Activated naive CD4-positive, alpha-beta T cell treated with anti-CD3 and anti-CD28 coated beads for 36 hours (primary cell): ENCODE measurements at regions of chr18 and their contacts with region 1.

Region 1: DNA sequence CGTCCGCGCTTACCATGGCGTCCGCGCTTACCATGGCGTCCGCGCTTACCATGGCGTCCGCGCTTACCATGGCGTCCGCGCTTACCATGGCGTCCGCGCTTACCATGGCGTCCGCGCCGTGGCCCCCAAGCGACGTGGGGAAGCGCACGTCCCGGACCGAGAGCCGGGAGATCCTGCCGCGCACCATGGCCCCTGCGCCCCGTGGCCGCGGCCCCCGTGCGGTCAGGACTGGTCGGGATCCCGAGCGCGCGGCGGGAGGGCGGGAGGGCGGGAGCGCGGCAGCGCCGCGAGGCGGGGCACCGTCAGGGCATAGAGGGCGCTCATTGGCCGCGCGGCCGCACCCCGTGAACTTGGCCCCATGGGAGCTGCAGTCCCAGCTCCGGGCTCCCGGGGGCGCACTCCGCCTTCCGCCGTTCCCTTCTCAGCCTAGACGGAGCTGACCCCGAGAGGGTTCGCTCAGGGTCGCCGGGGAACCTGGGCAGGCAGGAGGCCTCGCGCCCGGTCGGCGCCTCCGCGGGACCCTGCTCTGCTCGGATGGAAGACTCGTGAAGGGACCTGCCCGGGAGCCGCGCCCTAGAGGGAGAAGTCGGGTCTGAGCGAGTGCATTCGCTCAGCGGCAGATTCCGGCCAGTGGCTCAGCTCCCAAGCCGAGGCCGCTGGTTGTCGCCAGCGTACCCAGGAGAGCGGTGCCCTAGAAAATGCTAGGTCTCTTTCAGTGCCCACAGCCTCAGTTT is at the start of gene ENOSF1:
- DNase-seq: peak; percentile 92
- H3K4me3 Mint-ChIP-seq: peak within 1 kb of the TSS; percentile 78
- H3K27ac Mint-ChIP-seq: peak within 1 kb of the TSS; percentile 75
- H3K4me1 Mint-ChIP-seq: peaks cover 45% of the 10 kb centered on the region
- H3K27me3 Mint-ChIP-seq: no peaks in the 10 kb centered on the region
- total RNA-seq, gene ENOSF1: 61.3 to 66.1 TPM

Region 2: DNA sequence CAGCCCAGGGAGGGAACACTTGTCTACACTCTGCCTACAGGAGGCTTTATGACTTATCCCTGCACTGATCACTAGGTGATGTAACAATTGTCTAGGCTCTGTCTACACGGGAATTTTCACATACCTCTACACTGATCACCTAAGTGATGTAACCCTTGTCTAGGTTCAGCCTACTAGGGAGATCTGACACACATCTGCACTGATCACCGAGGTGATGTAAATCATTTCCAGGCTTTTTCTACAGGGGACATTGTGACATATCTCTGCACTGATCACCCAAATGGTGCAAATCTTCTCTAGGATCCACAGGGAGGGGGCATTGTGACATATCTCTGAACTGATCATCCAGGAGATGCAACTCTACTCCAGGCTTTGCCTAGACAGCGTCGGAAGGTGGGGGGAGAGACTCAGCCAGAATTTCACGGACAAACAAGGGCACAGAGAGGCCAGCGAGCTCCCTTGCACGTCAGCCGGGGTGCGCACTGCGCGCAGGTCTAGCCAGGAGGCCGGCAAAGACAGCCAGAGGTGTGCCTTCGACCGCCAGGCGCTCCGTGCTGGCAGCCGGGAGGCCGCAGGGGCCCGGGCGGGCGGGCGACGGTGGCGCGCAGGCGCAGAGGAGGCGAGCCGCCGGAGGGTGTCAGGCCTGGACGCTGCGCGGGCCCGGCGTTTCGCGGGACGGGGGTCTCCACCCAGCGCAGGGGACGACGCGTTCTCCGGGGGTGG is 601.1 kb before region 1 on chr18:
- CTCF ChIA-PET with region 1: no interaction called
- intact Hi-C with region 1: loop called (anchors 2 kb)
- DNase-seq: peak; percentile 69
- H3K4me3 Mint-ChIP-seq: peak overlapping the region; percentile 84
- H3K27ac Mint-ChIP-seq: peak overlapping the region; percentile 96
- H3K4me1 Mint-ChIP-seq: peaks cover 16% of the 10 kb centered on the region
- H3K27me3 Mint-ChIP-seq: no peaks in the 10 kb centered on the region

Region 3: GRCh38 chr18:596288-596881 is 116.2 kb before region 1 on chr18:
- CTCF ChIA-PET with region 1: no interaction called
- intact Hi-C with region 1: loop called (anchors 1 kb)
- DNase-seq: no peak
- H3K4me3 Mint-ChIP-seq: no peak overlapping the region
- H3K27ac Mint-ChIP-seq: no peak overlapping the region
- H3K4me1 Mint-ChIP-seq: peaks cover 4% of the 10 kb centered on the region
- H3K27me3 Mint-ChIP-seq: peaks cover 17% of the 10 kb centered on the region

Region 4: DNA sequence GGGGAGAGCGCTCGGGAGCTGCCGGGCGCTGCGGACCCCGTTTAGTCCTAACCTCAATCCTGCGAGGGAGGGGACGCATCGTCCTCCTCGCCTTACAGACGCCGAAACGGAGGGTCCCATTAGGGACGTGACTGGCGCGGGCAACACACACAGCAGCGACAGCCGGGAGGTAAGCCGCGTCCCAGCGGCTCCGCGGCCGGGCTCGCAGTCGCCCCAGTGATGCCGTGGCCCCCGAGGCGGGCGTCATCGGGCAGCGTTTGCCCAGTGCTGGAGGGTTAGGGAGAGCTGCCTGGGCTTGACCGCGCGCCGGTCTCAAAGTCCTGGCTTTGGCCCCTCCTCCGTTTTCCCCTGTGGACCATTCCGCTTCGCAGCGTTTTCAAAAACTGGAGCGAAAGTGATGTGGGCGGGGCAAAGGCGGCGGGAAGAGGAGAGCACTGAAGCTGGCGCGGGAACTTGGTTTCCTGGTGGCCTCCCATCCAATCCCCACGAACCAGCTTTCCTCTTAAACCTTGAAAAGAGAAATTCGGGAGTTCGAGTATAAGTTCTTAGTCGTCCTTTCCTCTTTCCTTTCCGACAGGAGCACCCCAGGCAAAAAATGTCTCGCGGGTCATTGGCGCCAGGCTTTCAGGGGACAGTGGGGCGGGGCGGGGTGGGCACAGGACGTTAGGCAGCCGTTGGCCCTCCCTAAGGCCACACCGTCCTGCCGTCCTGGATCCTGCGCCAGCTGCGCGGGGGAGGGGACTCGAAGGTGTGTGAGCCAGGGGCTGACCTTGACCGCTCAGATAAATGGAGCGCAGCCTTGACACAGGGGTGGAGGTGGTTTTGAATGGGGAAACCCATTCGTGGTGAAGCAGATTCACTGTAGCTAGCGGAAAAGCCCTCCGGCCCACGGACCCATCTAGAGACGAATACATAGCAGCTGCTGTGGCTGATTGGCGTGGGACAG is 54.3 kb before region 1 on chr18:
- CTCF ChIA-PET with region 1: interaction called, 3 read pairs
- intact Hi-C with region 1: loop called (anchors 1 kb)
- DNase-seq: peak; percentile 88
- H3K4me3 Mint-ChIP-seq: peak overlapping the region; percentile 93
- H3K27ac Mint-ChIP-seq: peak overlapping the region; percentile 87
- H3K4me1 Mint-ChIP-seq: peaks cover 14% of the 10 kb centered on the region
- H3K27me3 Mint-ChIP-seq: peaks cover 29% of the 10 kb centered on the region

Region 5: GRCh38 chr18:693466-694187 is 18.9 kb before region 1 on chr18:
- CTCF ChIA-PET with region 1: interaction called, 4 read pairs
- intact Hi-C with region 1: loop called (anchors 2 kb)
- DNase-seq: no peak
- H3K4me3 Mint-ChIP-seq: no peak overlapping the region
- H3K27ac Mint-ChIP-seq: peak overlapping the region; percentile 24
- H3K4me1 Mint-ChIP-seq: peaks cover 3% of the 10 kb centered on the region
- H3K27me3 Mint-ChIP-seq: no peaks in the 10 kb centered on the region

Region 6: DNA sequence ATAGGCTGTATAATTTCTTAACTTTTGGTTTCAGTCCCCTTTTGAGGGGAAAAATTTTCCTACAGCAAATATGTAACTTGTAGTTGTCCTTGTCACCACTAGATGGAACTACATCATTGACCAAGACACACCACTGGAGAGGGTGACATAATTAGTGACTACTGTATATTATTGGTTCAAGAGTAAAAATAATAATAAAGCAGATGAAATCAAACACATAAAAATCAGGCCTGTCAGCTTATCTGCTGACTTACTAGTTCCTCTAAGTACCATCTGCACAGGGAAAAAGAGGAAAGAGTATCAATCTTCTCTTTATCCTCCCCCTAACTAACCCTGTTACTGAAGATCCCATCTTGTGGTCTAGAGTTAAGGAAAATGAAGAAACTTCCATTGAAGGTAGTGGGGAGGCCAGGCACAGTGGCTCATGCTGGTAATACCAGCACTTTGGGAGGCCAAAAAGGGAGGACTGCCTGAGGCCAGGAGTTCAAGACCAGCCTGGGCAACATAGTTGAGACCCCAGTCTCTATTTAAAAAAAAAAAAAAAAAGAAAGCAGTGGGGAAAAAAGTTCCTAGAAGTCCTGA is 29.5 kb after region 1 on chr18:
- CTCF ChIA-PET with region 1: interaction called, 6 read pairs
- intact Hi-C with region 1: loop called (anchors 2 kb)
- DNase-seq: no peak
- H3K4me3 Mint-ChIP-seq: no peak overlapping the region
- H3K27ac Mint-ChIP-seq: no peak overlapping the region
- H3K4me1 Mint-ChIP-seq: no peaks in the 10 kb centered on the region
- H3K27me3 Mint-ChIP-seq: no peaks in the 10 kb centered on the region

Region 7: GRCh38 chr18:830315-830901 is 117.8 kb after region 1 on chr18:
- CTCF ChIA-PET with region 1: interaction called, 29 read pairs
- intact Hi-C with region 1: loop called (anchors 1 kb)
- DNase-seq: peak; percentile 42
- H3K4me3 Mint-ChIP-seq: peak overlapping the region; percentile 16
- H3K27ac Mint-ChIP-seq: peak overlapping the region; percentile 72
- H3K4me1 Mint-ChIP-seq: peaks cover 21% of the 10 kb centered on the region
- H3K27me3 Mint-ChIP-seq: no peaks in the 10 kb centered on the region